HEK293 (cell line): ENCODE measurements at regions of chr16 and their contacts with region 1.

Region 1: GRCh38 chr16:55842369-55843104 is 9.6 kb upstream of the CES1 start:
- H3K4me3 ChIP-seq: no peak overlapping the region
- H3K27ac ChIP-seq: no peak overlapping the region
- H3K4me1 ChIP-seq: no peaks in the 10 kb centered on the region
- CTCF ChIP-seq: peak; percentile 42; the same call in 1 of the 2 replicates

Region 2: GRCh38 chr16:55711959-55712876 is 130.3 kb before region 1 on chr16:
- CTCF ChIA-PET with region 1: interaction called, 50 read pairs
- POLR2A ChIA-PET with region 1: no interaction called
- H3K4me3 ChIP-seq: no peak overlapping the region
- H3K27ac ChIP-seq: no peak overlapping the region
- H3K4me1 ChIP-seq: no peaks in the 10 kb centered on the region
- CTCF ChIP-seq: peak; percentile 55; the same call in 1 of the 2 replicates